CD4-positive, alpha-beta memory T cell (primary cell): ENCODE measurements at regions of chr12 and their contacts with region 1.

Region 1: GRCh38 chr12:7018350-7019042 is at the start of gene LPCAT3:
- DNase-seq: peak; percentile 98 to 99 (median 98)
- H3K4me3 ChIP-seq: peak within 1 kb of the TSS; percentile 72 to 76
- H3K4me3 Mint-ChIP-seq: peak within 1 kb of the TSS; percentile 86 to 99 (median 95)
- H3K27ac ChIP-seq: peak within 1 kb of the TSS; percentile 85
- H3K27ac Mint-ChIP-seq: peak within 1 kb of the TSS; percentile 90 to 98 (median 95)
- H3K4me1 ChIP-seq: peaks cover 23% of the 10 kb centered on the region
- H3K4me1 Mint-ChIP-seq: peaks cover 18 to 37% (median 24%) of the 10 kb centered on the region in 4 donors
- H3K27me3 ChIP-seq: no peaks in the 10 kb centered on the region
- H3K27me3 Mint-ChIP-seq: no peaks in the 10 kb centered on the region
- total RNA-seq, gene LPCAT3: 18.3 to 21.6 TPM

Region 2: DNA sequence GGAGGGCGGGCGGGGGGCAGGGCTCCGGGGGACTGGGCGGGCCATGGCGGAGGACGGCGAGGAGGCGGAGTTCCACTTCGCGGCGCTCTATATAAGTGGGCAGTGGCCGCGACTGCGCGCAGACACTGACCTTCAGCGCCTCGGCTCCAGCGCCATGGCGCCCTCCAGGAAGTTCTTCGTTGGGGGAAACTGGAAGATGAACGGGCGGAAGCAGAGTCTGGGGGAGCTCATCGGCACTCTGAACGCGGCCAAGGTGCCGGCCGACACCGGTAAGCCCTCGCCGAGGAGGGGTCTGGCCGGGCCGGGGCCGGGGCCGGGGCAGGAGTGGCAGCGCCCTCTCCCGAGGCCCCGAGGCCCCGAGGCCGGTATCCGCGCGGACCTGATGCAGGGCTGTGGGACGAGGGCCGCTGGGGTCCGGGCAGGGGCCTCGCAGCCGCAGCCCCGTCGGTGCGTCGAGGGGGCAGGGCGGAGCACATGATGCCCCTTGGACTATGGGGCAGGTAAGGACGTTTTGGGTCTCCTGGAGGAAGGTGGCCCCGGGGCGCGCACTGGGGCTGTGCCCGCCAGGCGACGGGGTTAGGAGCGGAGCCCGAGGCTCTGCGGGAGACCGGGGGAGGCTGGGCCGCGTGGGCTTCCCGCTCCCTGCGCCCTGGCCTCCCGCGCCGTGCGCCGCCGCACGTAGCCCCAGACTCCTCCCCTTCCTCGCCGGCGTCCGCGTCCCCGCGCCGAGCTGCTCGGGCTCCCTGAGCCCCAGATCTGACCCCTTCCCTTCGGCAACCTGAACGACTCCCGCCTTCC is 150.9 kb before region 1 on chr12 and contains the start of gene TPI1:
- CTCF ChIA-PET with region 1: interaction called, 7 read pairs
- POLR2A ChIA-PET with region 1: interaction called, 14 read pairs
- intact Hi-C with region 1: loop called (anchors 1 kb)
- DNase-seq: peak; percentile 59 to 68 (median 62)
- H3K4me3 ChIP-seq: peak within 1 kb of the TSS; percentile 36 to 67
- H3K4me3 Mint-ChIP-seq: peak within 1 kb of the TSS; percentile 89 to 96 (median 92)
- H3K27ac ChIP-seq: peak within 1 kb of the TSS; percentile 69
- H3K27ac Mint-ChIP-seq: peak within 1 kb of the TSS; percentile 91 to 97 (median 93)
- H3K4me1 ChIP-seq: peaks cover 51% of the 10 kb centered on the region
- H3K4me1 Mint-ChIP-seq: peaks cover 33 to 58% (median 48%) of the 10 kb centered on the region in 4 donors
- H3K27me3 ChIP-seq: no peaks in the 10 kb centered on the region
- H3K27me3 Mint-ChIP-seq: no peaks in the 10 kb centered on the region
- total RNA-seq, gene TPI1: 155 to 164 TPM

Region 3: GRCh38 chr12:6890789-6891645 is 127.5 kb before region 1 on chr12:
- CTCF ChIA-PET with region 1: no interaction called
- POLR2A ChIA-PET with region 1: interaction called, 6 read pairs
- intact Hi-C with region 1: loop called (anchors 1 kb)
- DNase-seq: peak; percentile 97 to 98 (median 98)
- H3K4me3 ChIP-seq: peak overlapping the region; percentile 74 to 93
- H3K4me3 Mint-ChIP-seq: peak overlapping the region; percentile 82 to 87 (median 85)
- H3K27ac ChIP-seq: peak overlapping the region; percentile 91
- H3K27ac Mint-ChIP-seq: peak overlapping the region; percentile 92 to 98 (median 95)
- H3K4me1 ChIP-seq: peaks cover 16% of the 10 kb centered on the region
- H3K4me1 Mint-ChIP-seq: peaks cover 5 to 15% (median 11%) of the 10 kb centered on the region in 4 donors
- H3K27me3 ChIP-seq: no peaks in the 10 kb centered on the region
- H3K27me3 Mint-ChIP-seq: no peaks in the 10 kb centered on the region

Region 4: DNA sequence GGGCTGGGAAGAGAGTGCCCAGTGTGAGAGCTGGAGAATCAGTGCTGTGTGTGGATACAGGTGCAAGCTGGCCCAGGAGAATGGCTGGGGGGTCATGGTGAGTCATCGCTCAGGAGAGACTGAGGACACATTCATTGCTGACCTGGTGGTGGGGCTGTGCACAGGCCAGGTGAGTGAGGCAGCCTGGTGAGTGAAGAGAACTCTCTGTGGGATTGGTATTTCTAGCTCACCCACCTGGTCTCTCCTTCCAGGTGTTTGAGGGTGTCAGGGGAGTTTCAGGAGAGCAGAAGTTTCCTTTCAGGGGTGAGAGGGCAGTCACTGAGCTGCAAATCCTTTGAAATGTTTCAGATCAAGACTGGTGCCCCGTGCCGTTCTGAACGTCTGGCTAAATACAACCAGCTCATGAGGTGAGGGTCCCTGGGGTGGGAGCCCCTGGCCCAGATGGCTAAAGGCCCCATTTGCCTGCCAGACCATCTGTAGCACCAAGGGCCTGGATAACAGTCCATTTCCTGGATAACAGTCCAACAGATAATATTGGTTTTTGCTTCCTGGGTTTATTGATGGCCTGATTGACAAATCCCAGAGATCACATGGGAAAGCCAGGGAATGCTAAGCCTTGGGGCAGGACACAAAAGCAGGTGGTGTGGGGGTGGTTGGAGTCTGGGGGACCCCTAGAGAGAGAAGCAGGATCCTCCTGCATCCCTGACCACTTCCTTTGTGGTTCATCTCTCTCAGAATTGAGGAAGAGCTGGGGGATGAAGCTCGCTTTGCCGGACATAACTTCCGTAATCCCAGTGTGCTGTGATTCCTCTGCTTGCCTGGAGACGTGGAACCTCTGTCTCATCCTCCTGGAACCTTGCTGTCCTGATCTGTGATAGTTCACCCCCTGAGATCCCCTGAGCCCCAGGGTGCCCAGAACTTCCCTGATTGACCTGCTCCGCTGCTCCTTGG is 96.2 kb before region 1 on chr12:
- CTCF ChIA-PET with region 1: interaction called, 6 read pairs
- POLR2A ChIA-PET with region 1: interaction called, 6 read pairs
- intact Hi-C with region 1: loop called (anchors 1 kb)
- DNase-seq: no peak
- H3K4me3 ChIP-seq: no peak overlapping the region
- H3K4me3 Mint-ChIP-seq: no peak overlapping the region
- H3K27ac ChIP-seq: no peak overlapping the region
- H3K27ac Mint-ChIP-seq: peak overlapping the region in 4 of 7 donors; percentile 30 to 95 (median 49)
- H3K4me1 ChIP-seq: peaks cover 19% of the 10 kb centered on the region
- H3K4me1 Mint-ChIP-seq: peaks cover 13 to 33% (median 20%) of the 10 kb centered on the region in 4 donors
- H3K27me3 ChIP-seq: no peaks in the 10 kb centered on the region
- H3K27me3 Mint-ChIP-seq: no peaks in the 10 kb centered on the region

Region 5: GRCh38 chr12:6953442-6954315 is 64.8 kb before region 1 on chr12:
- CTCF ChIA-PET with region 1: no interaction called
- POLR2A ChIA-PET with region 1: interaction called, 10 read pairs
- intact Hi-C with region 1: no loop called
- DNase-seq: peak; percentile 72 to 95 (median 78)
- H3K4me3 ChIP-seq: peak overlapping the region; percentile 81 to 82
- H3K4me3 Mint-ChIP-seq: peak overlapping the region; percentile 94 to 100 (median 98)
- H3K27ac ChIP-seq: peak overlapping the region; percentile 96
- H3K27ac Mint-ChIP-seq: peak overlapping the region; percentile 89 to 98 (median 96)
- H3K4me1 ChIP-seq: peaks cover 81% of the 10 kb centered on the region
- H3K4me1 Mint-ChIP-seq: peaks cover 62 to 97% (median 66%) of the 10 kb centered on the region in 4 donors
- H3K27me3 ChIP-seq: no peaks in the 10 kb centered on the region
- H3K27me3 Mint-ChIP-seq: peaks cover 0 to 3% of the 10 kb centered on the region in 2 donors

Region 6: DNA sequence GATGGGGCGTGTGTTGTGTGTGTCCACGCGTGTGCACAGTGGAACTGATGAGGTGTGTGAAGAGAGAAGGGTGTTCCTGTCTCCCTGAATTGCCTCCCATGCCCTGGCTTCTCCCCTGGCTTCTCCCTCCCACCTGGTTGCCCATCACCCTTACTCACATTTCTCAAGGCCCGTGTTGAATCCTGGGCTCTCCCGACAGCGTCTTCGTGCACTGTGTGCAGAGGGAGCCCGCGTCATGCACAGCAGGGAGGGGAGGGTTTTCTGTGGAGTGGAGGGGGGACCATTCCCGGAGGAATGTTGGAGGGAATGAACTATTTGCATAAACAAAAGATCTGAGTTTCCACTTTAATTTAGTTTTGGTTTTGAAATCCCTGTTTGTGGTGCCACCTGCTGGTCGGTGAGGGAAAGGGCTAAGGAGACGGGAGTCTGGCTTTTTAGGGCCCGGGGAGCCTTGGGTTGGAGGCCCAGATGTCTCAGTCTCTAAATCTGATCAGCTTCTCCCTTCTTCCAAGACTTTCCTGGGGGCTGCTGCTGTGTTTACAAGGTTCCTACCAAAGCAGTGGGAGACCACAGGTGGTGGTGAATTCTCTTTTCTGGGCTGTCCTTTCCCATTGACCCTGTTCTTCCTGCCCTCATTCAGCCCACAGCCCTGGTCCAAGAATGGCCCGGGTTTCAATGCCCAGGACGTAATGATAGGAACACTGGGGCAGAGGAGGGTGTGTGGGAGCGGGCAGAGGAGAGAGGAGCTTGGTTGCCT is 73.9 kb after region 1 on chr12 and contains the start of gene C1R:
- CTCF ChIA-PET with region 1: no interaction called
- POLR2A ChIA-PET with region 1: no interaction called
- intact Hi-C with region 1: loop called (anchors 5 kb)
- DNase-seq: peak; percentile 60 to 71 (median 63)
- H3K4me3 ChIP-seq: peak within 1 kb of the TSS in 1 of 2 donors; percentile 56
- H3K4me3 Mint-ChIP-seq: peak within 1 kb of the TSS; percentile 70 to 90 (median 86)
- H3K27ac ChIP-seq: peak within 1 kb of the TSS; percentile 44
- H3K27ac Mint-ChIP-seq: peak within 1 kb of the TSS in 5 of 7 donors; percentile 57 to 89 (median 84)
- H3K4me1 ChIP-seq: peaks cover 15% of the 10 kb centered on the region
- H3K4me1 Mint-ChIP-seq: peaks cover 6 to 12% (median 8%) of the 10 kb centered on the region in 4 donors
- H3K27me3 ChIP-seq: no peaks in the 10 kb centered on the region
- H3K27me3 Mint-ChIP-seq: no peaks in the 10 kb centered on the region
- total RNA-seq, gene C1R: 0.86 to 2.3 TPM

Region 7: GRCh38 chr12:7339675-7340074 is 321.2 kb after region 1 on chr12:
- CTCF ChIA-PET with region 1: no interaction called
- POLR2A ChIA-PET with region 1: no interaction called
- intact Hi-C with region 1: no loop called
- DNase-seq: peak in 3 of 5 donors; percentile 11 to 17 (median 12)
- H3K4me3 ChIP-seq: no peak overlapping the region
- H3K4me3 Mint-ChIP-seq: peak overlapping the region in 4 of 8 donors; percentile 5 to 18 (median 9)
- H3K27ac ChIP-seq: no peak overlapping the region
- H3K27ac Mint-ChIP-seq: peak overlapping the region in 4 of 7 donors; percentile 13 to 76 (median 50)
- H3K4me1 ChIP-seq: peaks cover 17% of the 10 kb centered on the region
- H3K4me1 Mint-ChIP-seq: peaks cover 16 to 48% (median 24%) of the 10 kb centered on the region in 4 donors
- H3K27me3 ChIP-seq: no peaks in the 10 kb centered on the region
- H3K27me3 Mint-ChIP-seq: no peaks in the 10 kb centered on the region